Heart left ventricle (tissue), 16 donors: ENCODE measurements at regions of chr1 and their contacts with region 1.

Region 1: DNA sequence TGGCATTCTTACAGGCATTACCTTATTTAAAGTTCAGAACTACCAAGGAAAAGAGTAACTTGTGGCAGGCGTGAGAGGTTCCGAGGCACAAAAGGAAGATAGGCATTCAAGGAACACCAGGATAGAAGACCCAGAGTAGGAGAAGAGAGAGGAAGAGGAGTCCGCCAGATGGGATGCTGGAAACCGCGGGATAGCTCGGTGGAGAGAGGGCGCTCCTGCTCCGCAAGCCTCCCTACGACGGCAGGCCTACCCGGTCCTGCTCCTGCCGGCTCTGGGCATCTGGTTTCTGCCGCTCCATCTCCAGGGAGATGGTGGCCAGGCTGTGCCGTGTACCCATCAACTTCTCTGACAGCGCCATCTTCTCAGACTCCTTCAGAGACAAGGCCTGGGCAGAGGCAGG is 5.4 kb upstream of the NBPF1 start:
- DNase-seq: peak; percentile 5 to 74 (median 22)
- ATAC-seq: no peak
- H3K4me3 ChIP-seq: no peak overlapping the region
- H3K27ac ChIP-seq: no peak overlapping the region
- H3K4me1 ChIP-seq: peaks cover 0 to 6% (median 5%) of the 10 kb centered on the region in 12 donors
- H3K27me3 ChIP-seq: peaks cover 0 to 8% (median 0%) of the 10 kb centered on the region in 9 donors
- CTCF ChIP-seq: no peak
- POLR2A ChIP-seq: no peak

Region 2: GRCh38 chr1:16464903-16465625 is 153.7 kb before region 1 on chr1:
- intact Hi-C with region 1: no loop called
- DNase-seq: no peak
- ATAC-seq: no peak
- H3K4me3 ChIP-seq: no peak overlapping the region
- H3K27ac ChIP-seq: no peak overlapping the region
- H3K4me1 ChIP-seq: no peaks in the 10 kb centered on the region
- H3K27me3 ChIP-seq: no peaks in the 10 kb centered on the region
- CTCF ChIP-seq: no peak
- POLR2A ChIP-seq: no peak

Region 3: DNA sequence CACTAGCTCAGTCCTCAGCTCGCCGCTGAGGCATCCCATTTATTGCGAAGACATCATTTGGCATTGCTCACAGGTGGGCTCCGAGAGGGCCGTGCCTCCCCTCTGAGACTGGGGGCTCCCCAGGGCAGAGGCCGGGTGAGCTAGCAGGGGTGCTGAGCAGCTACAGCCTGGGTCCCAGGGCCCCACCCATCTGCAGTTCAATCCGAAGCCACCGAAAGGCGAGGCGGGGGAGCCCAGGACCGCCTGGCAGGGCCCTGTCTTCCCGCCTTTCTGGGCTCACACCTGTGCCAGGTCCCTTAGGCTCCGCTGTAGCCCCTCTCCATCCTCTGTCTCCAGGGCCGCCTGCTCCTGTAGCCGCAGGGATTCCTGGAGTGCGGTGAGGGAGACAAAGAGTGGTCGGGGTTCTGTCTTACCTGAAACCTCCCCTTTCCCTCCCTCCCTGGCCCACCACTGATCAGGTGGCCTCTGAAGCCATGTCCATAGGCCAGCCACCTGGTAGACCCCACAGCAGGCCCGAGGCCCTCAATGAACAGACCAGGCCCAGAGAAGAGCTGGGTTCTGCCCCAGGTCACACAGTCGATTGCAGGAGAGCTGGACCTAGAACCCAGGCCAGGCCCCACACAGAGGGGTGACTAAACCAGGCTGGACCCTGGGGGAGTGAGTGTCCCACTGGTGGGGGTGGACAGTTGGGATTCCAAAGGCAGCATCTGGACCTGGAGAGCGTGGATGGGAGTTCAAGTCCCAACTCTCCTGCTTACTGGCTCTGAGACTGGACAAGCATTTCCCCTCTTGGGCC is 12.7 kb after region 1 on chr1:
- intact Hi-C with region 1: loop called in 1 of 10 experiments (anchors 2 kb)
- DNase-seq: peak in 4 of 5 donors; percentile 24 to 75 (median 34)
- ATAC-seq: peak in 1 of 4 donors; percentile 2
- H3K4me3 ChIP-seq: no peak overlapping the region
- H3K27ac ChIP-seq: no peak overlapping the region
- H3K4me1 ChIP-seq: peaks cover 0 to 4% (median 0%) of the 10 kb centered on the region in 12 donors
- H3K27me3 ChIP-seq: no peaks in the 10 kb centered on the region
- CTCF ChIP-seq: no peak
- POLR2A ChIP-seq: no peak

Region 4: GRCh38 chr1:17190010-17190995 is 571.6 kb after region 1 on chr1:
- intact Hi-C with region 1: no loop called
- DNase-seq: peak in 2 of 5 donors; percentile 4 to 32
- ATAC-seq: no peak
- H3K4me3 ChIP-seq: no peak overlapping the region
- H3K27ac ChIP-seq: no peak overlapping the region
- H3K4me1 ChIP-seq: no peaks in the 10 kb centered on the region
- H3K27me3 ChIP-seq: peaks cover 0 to 18% (median 0%) of the 10 kb centered on the region in 9 donors
- CTCF ChIP-seq: no peak
- POLR2A ChIP-seq: no peak